Head of caudate nucleus (tissue), 42 donors: ENCODE measurements at regions of chr3 and their contacts with region 1.

Region 1: DNA sequence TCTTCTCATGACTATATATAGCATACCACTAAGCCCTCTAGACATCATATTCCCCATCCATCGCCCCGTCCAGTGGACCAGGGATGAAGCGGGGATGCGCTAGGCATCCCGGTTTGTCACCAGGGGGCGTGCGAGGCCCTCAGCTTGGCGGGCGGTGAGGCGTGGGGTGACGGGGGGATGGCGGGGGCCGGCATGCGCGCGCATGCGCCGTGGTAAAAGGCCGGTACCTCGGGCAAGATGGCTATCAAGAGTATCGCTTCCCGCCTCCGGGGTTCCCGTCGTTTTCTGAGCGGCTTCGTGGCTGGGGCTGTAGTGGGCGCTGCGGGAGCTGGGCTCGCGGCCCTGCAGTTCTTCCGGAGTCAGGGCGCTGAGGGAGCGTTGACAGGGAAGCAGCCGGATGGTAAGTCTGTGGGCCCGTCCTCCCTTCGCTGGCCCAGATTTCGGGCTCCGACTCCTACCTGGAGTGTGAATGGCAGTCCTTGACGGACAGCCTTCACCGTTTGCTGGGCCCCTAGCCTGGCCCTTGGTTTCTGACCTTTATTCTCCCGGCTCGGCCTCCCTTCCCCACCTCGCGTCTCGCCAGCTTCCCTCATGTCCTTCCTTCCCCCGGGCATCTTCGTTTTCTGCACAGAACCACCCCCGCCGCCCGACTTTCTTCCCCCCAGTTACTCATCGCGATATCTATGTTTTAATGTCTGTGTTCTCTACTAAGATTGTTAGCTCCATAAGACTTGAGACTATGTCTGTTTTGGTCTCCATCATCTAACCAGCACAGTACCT is at the start of gene EXOG:
- DNase-seq: peak; percentile 81 to 99 (median 96)

Region 2: DNA sequence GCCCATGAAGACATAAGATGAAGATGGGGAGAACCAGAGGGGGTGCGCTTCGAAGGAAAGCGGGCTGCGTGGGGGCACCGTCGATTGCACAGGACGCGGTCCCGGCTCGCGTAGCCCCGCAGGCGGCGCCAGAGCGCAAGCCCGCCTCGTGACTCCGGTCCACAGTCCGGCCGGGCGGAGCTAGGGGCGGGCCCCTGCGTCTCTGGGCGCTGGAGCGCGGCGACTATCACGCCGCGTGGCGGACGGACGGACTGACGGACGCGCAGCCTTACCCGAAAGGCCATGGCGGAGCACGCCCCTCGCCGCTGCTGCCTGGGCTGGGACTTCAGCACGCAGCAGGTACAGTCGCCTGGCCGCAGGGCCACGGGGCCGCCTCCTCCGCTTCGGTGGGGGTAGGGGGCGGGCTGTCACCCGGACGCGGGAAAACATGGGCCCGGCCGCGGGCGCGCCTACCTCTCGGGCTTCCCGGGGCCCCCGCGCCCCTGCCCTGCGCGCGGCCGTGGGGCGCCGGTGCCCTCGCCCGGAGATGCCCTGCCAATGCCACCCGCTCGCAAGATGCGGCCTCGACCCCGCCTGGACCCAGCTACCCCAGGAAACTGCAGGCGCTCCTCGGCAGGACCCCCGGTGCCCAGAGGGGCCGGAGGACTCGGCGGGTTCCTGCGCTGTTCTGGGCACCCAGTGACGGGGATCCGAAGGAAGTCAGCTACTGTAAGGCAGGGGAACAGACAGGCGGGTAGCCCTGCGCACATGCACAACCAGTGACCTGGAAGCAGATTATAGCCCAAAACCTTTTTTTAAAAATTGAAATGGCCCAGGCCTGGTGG is 149.5 kb before region 1 on chr3 and contains the start of gene XYLB:
- intact Hi-C with region 1: loop called (anchors 5 kb)
- DNase-seq: peak; percentile 52 to 92 (median 84)

Region 3: DNA sequence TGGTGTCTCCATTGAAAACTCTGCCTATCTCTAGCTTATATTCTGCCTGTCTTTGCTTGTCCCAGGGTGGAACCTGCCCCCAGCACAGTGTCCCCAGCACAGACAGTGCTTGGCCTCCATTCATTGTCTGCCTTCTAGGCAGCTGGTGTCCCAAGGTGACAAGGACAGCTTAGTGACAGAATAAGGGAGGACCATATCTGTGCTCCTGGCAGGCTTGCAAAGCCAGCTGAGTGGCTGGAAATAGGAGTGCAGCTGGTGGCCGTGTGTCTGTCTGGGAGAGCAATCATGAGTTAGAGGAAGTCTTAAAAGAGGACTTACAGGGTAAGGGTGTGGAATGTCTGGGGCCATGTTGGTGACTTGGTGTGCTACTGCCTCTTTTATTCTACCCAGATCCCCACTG is 119.8 kb after region 1 on chr3:
- intact Hi-C with region 1: no loop called
- DNase-seq: no peak

Region 4: DNA sequence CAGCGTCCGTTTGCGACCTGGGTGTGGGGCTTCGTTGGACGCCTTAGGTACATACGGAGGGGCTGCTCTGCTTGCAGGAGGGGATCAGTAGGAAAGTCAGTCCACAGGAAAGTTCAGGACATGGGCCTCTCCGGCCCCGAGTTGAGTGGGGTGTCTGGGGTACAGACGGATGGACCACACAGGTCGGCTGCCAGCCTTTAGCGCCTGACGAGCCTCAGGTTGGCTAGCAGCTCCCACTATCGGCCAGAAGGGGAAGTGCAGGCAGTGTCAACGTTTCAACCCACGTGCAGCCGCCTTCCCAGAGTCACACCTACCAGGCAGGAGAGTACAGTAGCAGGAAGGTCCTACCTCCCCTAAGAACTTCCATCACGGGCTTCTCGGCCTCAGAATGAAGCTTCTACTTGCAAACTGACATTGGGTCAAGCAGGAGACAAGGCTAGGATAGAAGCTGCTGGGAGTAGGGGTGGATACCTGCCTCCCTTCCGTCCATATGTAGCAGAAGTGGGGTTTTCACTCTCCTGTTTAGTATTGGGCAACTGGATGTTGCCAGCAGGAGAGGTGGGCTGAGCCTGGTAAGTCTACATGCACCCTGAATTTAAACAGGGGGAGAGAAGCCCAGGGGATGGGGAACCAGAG is 155.0 kb after region 1 on chr3:
- intact Hi-C with region 1: loop called (anchors 10 kb)
- DNase-seq: peak; percentile 43 to 88 (median 70)